ENCODE measurements at regions of chr19 and their contacts with region 1.

Region 1: GRCh38 chr19:13104360-13104847 is 1.7 kb upstream of the LYL1 start:
- DNase-seq: peak in 1 of 2 experiments; percentile 31
- ATAC-seq: peak in 1 of 2 experiments; percentile 59; a peak in 3 of 6 replicates
- H3K4me3 ChIP-seq: no peak overlapping the region
- H3K27ac ChIP-seq: no peak overlapping the region
- H3K4me1 ChIP-seq: no peaks in the 10 kb centered on the region
- CTCF ChIP-seq: peak; percentile 34; the same call in 2 of the 3 replicates
- EP300 ChIP-seq: no peak
- POLR2A ChIP-seq: no peak
- RAD21 ChIP-seq: peak in 1 of 2 experiments; percentile 6; a peak in 1 of 5 replicates

Region 2: GRCh38 chr19:12974301-12975220 is 129.8 kb before region 1 on chr19:
- CTCF ChIA-PET with region 1: interaction called, 15 read pairs
- POLR2A ChIA-PET with region 1: no interaction called
- DNase-seq: no peak
- ATAC-seq: no peak
- H3K4me3 ChIP-seq: no peak overlapping the region
- H3K27ac ChIP-seq: peak overlapping the region in 1 of 2 experiments; percentile 35; a peak in 2 of 6 replicates
- H3K4me1 ChIP-seq: peaks cover 11% of the 10 kb centered on the region; the same call in 2 of the 3 replicates
- CTCF ChIP-seq: no peak
- EP300 ChIP-seq: no peak
- POLR2A ChIP-seq: no peak
- RAD21 ChIP-seq: no peak